Naive thymus-derived CD8-positive, alpha-beta T cell (primary cell): ENCODE measurements at regions of chr17 and their contacts with region 1.

Region 1: DNA sequence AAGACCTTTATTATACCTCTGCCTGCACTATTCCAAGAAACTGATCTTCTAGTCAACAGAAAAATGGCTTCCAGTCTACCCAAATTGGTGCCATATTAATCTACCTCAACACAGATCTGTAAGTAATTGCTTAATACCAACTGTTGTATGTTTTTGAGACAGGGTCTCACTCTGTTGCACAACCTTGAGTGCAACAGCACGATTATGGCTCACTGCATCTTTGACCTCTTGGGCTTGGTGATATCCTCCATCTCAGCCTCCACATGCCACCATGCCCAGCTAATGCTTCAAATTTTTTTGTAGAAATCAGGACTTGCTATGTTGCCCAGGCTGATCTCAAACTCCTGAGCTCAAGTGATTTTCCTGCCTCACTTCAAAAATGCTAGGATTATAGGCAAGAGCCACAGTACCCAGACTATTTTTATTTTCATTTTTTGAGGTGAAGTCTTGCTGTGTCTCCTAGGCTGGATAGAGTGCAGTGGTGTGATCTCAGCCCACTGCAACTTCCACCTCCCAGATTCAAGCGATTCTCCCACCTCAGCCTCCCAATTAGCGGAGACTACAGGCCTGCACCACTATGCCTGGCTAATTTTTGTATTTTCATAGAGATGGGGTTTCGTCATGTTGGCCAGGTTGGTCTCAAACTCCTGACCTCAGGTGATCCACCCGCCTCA is 14.4 kb downstream of the NUFIP2 start:
- DNase-seq: no peak
- ATAC-seq: no peak
- H3K4me3 Mint-ChIP-seq: peak overlapping the region in 5 of 10 donors; percentile 18 to 62 (median 54)
- H3K27ac Mint-ChIP-seq: peak overlapping the region in 3 of 10 donors; percentile 20 to 76 (median 52)
- H3K4me1 Mint-ChIP-seq: peaks cover 34 to 78% (median 69%) of the 10 kb centered on the region in 4 donors
- H3K27me3 Mint-ChIP-seq: no peaks in the 10 kb centered on the region

Region 2: GRCh38 chr17:29293890-29294579 is 14.5 kb after region 1 on chr17 and contains the start of gene NUFIP2:
- POLR2A ChIA-PET with region 1: interaction called, 21 read pairs
- DNase-seq: peak; percentile 92 to 99 (median 98)
- ATAC-seq: peak; percentile 84 to 86
- H3K4me3 Mint-ChIP-seq: peak within 1 kb of the TSS; percentile 97 to 100 (median 99)
- H3K27ac Mint-ChIP-seq: peak within 1 kb of the TSS; percentile 97 to 99 (median 98)
- H3K4me1 Mint-ChIP-seq: peaks cover 15 to 50% (median 40%) of the 10 kb centered on the region in 4 donors
- H3K27me3 Mint-ChIP-seq: no peaks in the 10 kb centered on the region
- polyA plus RNA-seq, gene NUFIP2: 9.2 to 11.9 (median 11.5) TPM